ENCODE measurements at regions of chr17 and their contacts with region 1.

Region 1: DNA sequence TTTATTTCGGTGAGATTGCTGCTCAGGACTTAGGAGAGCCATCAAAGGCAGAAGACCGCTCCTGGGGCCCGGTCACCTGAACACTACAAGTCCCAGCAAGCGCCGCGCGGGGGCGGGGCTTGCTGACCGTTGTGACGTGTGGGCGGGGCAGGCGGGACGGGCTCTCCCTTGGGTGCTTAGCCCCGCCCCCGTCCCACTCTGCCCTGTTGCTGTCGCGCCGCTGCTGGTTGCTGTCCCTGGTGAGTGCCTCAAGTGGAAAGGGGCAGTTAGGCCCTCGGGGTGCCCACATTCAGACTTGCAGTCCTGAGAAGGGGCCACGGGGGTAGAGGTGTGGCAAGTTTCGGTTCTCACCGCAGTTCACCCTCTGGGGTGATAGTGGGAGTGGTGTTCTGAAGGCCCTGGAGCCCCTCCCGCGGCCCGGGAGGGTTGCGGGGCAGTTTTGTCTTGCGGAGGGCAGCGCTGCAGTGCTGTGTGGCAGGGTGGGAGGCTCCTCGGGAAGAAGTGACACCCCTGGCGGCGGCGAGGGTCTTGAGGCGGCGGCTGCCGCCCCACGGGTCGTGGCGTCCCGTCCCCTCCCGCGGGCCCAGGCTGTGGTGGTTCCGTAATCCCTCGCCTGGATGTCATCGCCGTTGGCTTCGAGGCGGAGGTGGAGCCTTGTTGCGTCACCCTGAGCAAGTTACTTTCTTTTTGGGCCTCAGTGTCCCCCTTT is at the start of gene CALCOCO2:
- DNase-seq: peak; percentile 42
- H3K4me3 ChIP-seq: peak within 1 kb of the TSS; percentile 100
- CTCF ChIP-seq: no peak

Region 2: GRCh38 chr17:48816774-48817590 is 14.0 kb before region 1 on chr17 and contains the start of gene TTLL6:
- CTCF ChIA-PET with region 1: interaction called, 15 read pairs
- POLR2A ChIA-PET with region 1: no interaction called
- DNase-seq: no peak
- H3K4me3 ChIP-seq: peak within 1 kb of the TSS; percentile 45
- CTCF ChIP-seq: no peak

Measured in AG04449 (cell line).